ENCODE measurements at regions of chr17 and their contacts with region 1.

Region 1: GRCh38 chr17:29931231-29931932 is 1.4 kb upstream of the SSH2 start:
- DNase-seq: peak; percentile 61
- H3K4me3 Mint-ChIP-seq: no peak overlapping the region
- H3K27ac Mint-ChIP-seq: no peak overlapping the region
- H3K4me1 Mint-ChIP-seq: peaks cover 16% of the 10 kb centered on the region
- H3K27me3 Mint-ChIP-seq: no peaks in the 10 kb centered on the region

Region 2: DNA sequence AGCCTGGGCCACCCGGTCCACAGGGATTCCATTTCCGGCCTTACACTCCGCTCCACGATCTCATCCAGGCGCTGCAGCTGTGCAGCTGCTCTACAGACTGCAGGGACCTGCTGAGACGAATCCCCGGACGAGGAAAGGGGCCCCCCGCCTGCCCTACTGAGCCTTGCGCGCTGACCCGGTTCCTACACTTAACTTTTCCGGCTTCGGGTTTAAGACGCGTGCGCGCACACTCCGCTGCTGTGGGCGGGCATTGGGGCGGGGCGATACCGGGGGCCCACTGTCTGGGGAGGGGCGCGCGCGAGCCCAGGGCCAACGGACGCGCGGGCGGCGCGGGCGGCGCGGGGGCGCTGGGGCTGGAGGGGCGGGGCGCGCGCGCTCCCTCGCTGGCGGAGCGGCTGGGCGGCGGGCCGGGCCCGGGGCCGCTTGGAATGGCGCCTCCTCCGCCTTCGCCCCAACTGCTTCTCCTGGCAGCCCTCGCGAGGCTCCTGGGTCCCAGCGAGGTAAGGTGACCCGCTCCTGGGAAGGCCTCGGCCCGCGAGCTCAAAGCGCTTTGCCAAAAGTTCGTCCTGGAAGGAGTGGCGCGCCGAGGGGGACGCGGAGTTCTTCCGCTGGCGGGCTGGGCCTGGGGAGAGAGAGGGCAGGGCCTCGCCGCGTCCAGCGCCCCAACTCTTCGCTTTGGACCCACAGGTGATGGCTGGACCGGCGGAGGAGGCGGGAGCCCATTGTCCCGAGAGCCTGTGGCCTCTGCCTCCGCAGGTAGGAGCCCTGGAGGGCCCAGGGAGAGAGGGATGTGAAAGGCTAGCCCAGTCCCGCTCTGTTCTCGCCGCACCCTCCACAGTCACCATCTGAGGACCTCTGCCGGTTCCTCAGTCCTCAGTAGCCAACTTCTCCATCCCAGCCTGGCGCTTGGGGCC is 362.8 kb before region 1 on chr17 and contains the start of gene TP53I13:
- intact Hi-C with region 1: loop called (anchors 5 kb)
- DNase-seq: peak; percentile 85
- H3K4me3 Mint-ChIP-seq: peak within 1 kb of the TSS; percentile 94
- H3K27ac Mint-ChIP-seq: peak within 1 kb of the TSS; percentile 96
- H3K4me1 Mint-ChIP-seq: peaks cover 25% of the 10 kb centered on the region
- H3K27me3 Mint-ChIP-seq: no peaks in the 10 kb centered on the region
- total RNA-seq, gene TP53I13: 78.2 and 84.8 TPM in 2 replicates

Region 3: DNA sequence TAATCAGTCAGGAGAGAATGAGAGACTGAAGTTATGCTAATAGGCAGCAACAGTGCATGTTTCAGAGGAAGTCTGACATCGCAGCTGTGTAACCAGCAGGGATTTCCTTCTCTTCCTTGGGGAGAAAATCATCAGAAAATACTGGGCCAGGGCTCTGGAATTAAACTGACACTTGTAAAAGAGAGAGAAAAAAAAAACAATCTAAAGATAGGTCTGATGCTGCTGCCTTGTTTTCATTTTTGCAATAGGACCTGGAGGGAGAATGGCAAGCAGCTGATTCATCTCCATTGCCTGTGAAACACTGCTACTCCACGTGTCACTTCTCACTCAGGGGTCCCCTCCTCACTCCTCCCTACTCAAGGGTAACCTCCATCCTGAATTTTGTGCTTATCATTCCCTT is 291.0 kb before region 1 on chr17:
- intact Hi-C with region 1: loop called (anchors 1 kb)
- DNase-seq: no peak
- H3K4me3 Mint-ChIP-seq: no peak overlapping the region
- H3K27ac Mint-ChIP-seq: peak overlapping the region; percentile 67
- H3K4me1 Mint-ChIP-seq: peaks cover 21% of the 10 kb centered on the region
- H3K27me3 Mint-ChIP-seq: no peaks in the 10 kb centered on the region

Region 4: DNA sequence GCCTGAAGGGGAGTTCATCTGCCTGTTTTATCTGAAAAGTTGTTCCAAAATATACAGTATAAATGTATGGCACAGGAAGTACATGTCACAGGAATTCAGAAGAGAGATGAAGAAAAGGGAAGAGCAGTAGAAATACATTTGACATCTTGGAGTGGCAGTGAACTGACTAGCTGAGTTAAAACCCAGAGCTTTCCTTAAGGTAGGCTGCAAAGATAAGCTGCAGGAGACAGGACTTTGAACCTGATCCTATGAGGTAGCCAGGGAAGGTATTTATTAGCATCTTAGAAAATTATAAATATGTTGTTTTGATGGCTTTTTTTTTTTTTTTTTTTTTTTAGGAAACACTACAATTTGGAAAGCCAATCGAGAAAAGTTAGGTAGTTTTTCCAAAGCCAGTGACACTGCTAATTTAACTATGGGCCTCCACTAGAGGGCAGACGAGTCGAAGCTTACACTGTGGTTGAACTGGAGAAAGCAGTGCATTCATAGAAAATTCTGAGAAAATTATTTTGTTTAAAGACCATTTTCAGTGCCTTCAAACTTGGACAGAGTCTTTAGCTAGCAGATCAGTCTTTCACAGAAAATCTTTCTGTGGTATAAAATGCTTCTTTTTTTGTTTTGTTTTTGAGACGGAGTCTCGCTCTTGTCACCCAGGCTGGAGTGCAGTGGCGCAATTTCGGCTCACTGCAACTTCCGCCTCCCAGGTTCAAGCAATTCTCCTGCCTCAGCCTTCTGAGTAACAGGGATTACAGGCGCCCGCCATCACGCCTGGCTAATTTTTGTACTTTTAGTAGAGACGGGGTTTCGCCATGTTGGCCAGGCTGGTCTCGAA is 123.6 kb before region 1 on chr17:
- intact Hi-C with region 1: loop called (anchors 1 kb)
- DNase-seq: peak; percentile 46
- H3K4me3 Mint-ChIP-seq: no peak overlapping the region
- H3K27ac Mint-ChIP-seq: no peak overlapping the region
- H3K4me1 Mint-ChIP-seq: peaks cover 14% of the 10 kb centered on the region
- H3K27me3 Mint-ChIP-seq: no peaks in the 10 kb centered on the region

Region 5: GRCh38 chr17:29867643-29868181 is 63.7 kb before region 1 on chr17:
- intact Hi-C with region 1: loop called (anchors 1 kb)
- DNase-seq: no peak
- H3K4me3 Mint-ChIP-seq: no peak overlapping the region
- H3K27ac Mint-ChIP-seq: no peak overlapping the region
- H3K4me1 Mint-ChIP-seq: peaks cover 5% of the 10 kb centered on the region
- H3K27me3 Mint-ChIP-seq: no peaks in the 10 kb centered on the region

Measured in activated T-helper 2 cell treated with anti-CD3 and anti-CD28 coated beads, Interferon-gamma antibody, Interleukin-2, Interleukin-4, amounts not matched to agents 10 μg/mL and 5 μg/mL and 100 μg/mL, durations not matched to agents 14 hours and 24 hours and 36 hours (primary cell).